ENCODE measurements at regions of chr12 and their contacts with region 1.

Region 1: GRCh38 chr12:34625116-34625515 is 602.8 kb downstream of the ALG10 start:
- DNase-seq: no peak
- ATAC-seq: no peak

Region 2: GRCh38 chr12:34126239-34126641 is 498.9 kb before region 1 on chr12:
- intact Hi-C with region 1: loop called (anchors 10 kb)
- DNase-seq: no peak
- ATAC-seq: no peak

Region 3: DNA sequence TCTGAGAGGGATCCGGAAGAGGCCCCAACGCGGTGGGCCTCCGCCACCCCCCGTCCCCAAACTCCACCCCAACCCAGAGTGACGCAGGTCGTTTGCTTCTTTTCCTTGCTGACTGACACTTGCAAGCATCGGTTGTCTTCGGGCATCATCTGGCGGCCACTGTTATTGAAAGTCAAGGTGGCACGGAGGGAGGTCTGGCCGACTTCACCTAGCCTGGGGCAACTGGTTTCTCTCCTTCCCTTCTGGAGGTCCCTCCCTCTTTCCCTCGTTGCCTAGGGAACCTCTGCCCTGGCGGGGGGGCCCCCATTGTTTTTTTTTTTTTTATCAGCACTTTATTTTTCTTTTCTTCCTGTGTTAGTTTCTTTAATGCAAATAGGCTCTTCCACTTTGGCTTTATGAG is 361.0 kb before region 1 on chr12:
- intact Hi-C with region 1: no loop called
- DNase-seq: no peak
- ATAC-seq: no peak

Region 4: DNA sequence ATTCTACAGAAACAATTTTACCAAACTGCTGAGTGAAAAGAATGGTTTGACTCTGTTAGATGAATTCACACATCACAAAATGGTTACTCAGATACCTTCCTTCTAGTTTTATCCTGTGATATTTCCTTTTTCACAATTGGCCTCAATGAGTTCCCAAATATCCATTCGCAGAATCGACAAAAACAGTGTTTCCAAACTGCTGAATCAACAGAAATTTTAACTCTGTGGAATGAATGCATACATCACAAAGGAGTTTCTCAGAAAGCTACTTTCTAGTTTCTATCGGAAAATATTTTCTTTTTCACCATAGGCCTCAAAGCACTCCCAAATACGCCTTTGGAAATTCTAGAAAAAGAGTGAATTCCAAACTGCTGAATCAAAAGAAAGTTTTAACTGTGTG is 77.8 kb before region 1 on chr12:
- intact Hi-C with region 1: no loop called
- DNase-seq: no peak
- ATAC-seq: no peak

Measured in Right ventricle myocardium inferior (tissue), 1 donor.